Activated CD8-positive, alpha-beta T cell treated with anti-CD3 and anti-CD28 coated beads, Interleukin-2, amount 10 ng/mL, durations not matched to agents 7 days and 5 days (primary cell): ENCODE measurements at regions of chr6 and their contacts with region 1.

Region 1: GRCh38 chr6:152338335-152339125 is 298.6 kb downstream of the SYNE1 start:
- DNase-seq: peak; percentile 66
- ATAC-seq: peak; percentile 77
- H3K4me3 Mint-ChIP-seq: no peak overlapping the region
- H3K27ac Mint-ChIP-seq: no peak overlapping the region
- H3K4me1 Mint-ChIP-seq: peaks cover 5% of the 10 kb centered on the region
- H3K27me3 Mint-ChIP-seq: peaks cover 7% of the 10 kb centered on the region

Region 2: GRCh38 chr6:152232501-152233151 is 105.9 kb before region 1 on chr6:
- CTCF ChIA-PET with region 1: interaction called, 11 read pairs
- POLR2A ChIA-PET with region 1: no interaction called
- DNase-seq: peak; percentile 39
- ATAC-seq: peak; percentile 57
- H3K4me3 Mint-ChIP-seq: peak overlapping the region; percentile 65
- H3K27ac Mint-ChIP-seq: peak overlapping the region; percentile 83
- H3K4me1 Mint-ChIP-seq: peaks cover 24% of the 10 kb centered on the region
- H3K27me3 Mint-ChIP-seq: no peaks in the 10 kb centered on the region

Region 3: DNA sequence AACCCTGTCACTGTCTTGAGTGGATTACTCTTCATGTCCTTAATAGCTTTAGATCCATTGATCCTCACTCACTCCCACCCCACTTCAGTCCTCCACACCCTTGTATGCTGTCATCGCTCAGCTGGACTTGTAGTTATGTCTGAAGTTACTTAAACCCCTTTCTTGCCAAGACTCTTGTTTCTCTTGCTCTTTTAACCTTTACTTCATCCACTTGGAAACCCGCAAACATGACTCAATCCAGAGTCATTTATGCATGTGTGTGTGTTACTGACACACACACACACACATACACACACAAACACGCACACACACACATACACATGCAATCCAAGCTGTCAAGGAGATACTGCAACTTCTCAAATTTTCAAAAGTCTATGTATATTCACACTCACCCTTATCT is 43.2 kb before region 1 on chr6:
- CTCF ChIA-PET with region 1: interaction called, 60 read pairs
- POLR2A ChIA-PET with region 1: no interaction called
- DNase-seq: no peak
- ATAC-seq: no peak
- H3K4me3 Mint-ChIP-seq: no peak overlapping the region
- H3K27ac Mint-ChIP-seq: no peak overlapping the region
- H3K4me1 Mint-ChIP-seq: peaks cover 10% of the 10 kb centered on the region
- H3K27me3 Mint-ChIP-seq: no peaks in the 10 kb centered on the region

Region 4: DNA sequence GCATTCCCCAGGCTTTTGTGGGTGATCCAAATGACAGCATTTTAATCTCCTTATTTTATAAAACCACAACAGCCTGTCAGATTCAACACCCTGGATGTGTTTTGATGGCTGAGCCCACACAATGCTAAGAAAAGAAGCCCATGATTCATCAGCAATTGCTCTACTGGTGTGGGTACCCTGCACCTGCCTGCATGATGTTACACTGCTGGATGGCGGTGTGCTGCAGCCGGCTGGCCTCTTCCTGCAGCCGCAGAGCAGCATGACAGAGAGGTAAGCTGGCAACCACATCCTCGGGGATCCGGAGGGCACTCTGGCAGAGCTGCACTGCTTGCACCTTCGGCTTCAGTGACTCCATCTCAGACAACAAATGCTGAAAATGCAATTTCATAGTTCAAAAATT is 28.9 kb before region 1 on chr6:
- CTCF ChIA-PET with region 1: interaction called, 12 read pairs
- POLR2A ChIA-PET with region 1: no interaction called
- DNase-seq: peak; percentile 85
- ATAC-seq: peak; percentile 99
- H3K4me3 Mint-ChIP-seq: no peak overlapping the region
- H3K27ac Mint-ChIP-seq: no peak overlapping the region
- H3K4me1 Mint-ChIP-seq: peaks cover 30% of the 10 kb centered on the region
- H3K27me3 Mint-ChIP-seq: peaks cover 3% of the 10 kb centered on the region

Region 5: GRCh38 chr6:152391179-152391880 is 52.8 kb after region 1 on chr6:
- CTCF ChIA-PET with region 1: no interaction called
- POLR2A ChIA-PET with region 1: no interaction called
- DNase-seq: no peak
- ATAC-seq: no peak
- H3K4me3 Mint-ChIP-seq: no peak overlapping the region
- H3K27ac Mint-ChIP-seq: no peak overlapping the region
- H3K4me1 Mint-ChIP-seq: no peaks in the 10 kb centered on the region
- H3K27me3 Mint-ChIP-seq: no peaks in the 10 kb centered on the region